ENCODE measurements at regions of chrX and their contacts with region 1.

Region 1: DNA sequence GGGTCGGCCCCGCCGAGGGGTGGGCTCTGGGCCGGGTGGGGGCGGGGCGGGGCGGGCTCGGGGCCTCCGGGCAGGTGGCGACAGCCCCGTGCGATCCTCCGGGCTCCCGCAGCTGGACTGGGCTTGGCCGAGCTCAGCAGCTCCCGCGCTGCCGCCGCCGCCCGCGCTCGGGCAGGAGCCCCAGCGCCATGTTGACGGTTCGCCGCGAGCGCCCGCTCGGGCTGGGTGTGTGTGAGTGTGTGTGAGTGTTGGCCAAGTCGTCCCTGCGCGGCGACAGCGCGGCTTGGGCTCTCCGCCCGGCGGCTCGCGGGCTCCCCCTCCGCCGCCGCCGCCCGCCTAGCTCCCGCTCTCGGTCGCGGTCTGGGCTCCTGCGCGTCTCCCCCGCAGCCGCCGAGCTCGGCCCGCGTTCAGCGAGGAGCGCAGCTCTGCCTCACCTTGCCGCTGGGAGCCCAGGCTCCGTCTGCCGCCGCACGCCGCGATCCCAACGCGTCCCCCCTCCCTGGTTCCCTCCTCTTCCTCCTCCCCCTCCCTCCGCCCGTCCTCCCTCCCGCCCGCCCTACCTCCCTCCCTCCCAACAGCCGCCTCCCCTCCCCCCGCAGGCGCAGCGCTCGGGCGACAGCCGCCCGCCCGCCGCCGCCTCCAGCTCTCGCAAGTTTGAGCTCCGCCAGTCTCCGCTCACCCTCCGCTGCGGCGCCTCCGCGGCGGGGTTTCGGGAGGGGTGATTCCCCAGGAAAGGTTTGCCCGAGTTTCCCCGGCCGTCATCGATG is at the start of gene BCOR:
- H3K4me3 ChIP-seq: peak within 1 kb of the TSS; percentile 85
- H3K27ac ChIP-seq: peak within 1 kb of the TSS; percentile 99
- H3K4me1 ChIP-seq: peaks cover 19% of the 10 kb centered on the region
- CTCF ChIP-seq: no peak

Region 2: GRCh38 chrX:40013266-40014195 is 84.1 kb before region 1 on chrX:
- CTCF ChIA-PET with region 1: no interaction called
- POLR2A ChIA-PET with region 1: interaction called, 13 read pairs
- H3K4me3 ChIP-seq: peak overlapping the region; percentile 49
- H3K27ac ChIP-seq: peak overlapping the region; percentile 95
- H3K4me1 ChIP-seq: no peaks in the 10 kb centered on the region; the same call in 1 of the 2 replicates
- CTCF ChIP-seq: 0 out of 2 replicates have a peak, but pooled peaks have one; percentile 23

Region 3: DNA sequence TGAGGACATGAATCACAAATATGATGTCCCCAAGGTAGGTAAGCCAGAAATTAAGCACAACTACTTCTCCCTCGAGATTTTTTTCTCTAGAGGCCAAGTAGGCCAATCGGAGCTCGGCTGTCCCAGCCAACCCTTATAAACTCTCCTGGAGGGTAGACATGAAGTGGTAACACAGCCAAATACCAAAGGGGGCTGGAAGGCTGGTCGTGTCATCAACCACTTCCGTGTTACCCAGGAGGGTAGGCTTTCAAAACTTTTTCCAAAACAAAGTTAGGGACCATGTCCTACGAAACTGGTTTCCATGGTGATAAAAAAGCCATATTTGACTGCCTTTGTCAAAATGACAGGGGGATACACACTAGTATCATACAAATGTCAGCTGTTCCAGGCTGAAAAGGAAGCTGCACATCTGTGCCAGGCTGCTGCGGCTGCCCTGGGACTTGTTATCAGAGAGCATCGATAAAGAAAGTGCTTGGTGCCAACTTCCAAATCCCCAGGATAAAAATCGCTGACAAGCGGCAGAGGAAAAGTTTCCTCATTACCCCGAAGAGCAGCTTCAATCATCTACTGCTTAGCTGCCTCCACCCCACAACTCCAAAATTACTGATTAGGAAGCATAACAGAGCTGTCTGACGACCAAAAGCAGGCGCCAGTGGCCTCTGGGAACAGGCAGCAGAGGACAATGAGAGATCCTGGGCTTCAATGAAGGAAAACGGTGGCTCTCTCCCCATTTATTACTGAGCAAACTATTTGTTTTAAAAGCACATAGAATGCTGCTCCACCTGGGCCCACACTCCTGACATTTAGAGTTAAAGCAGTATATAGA is 20.7 kb before region 1 on chrX:
- CTCF ChIA-PET with region 1: no interaction called
- POLR2A ChIA-PET with region 1: no interaction called
- H3K4me3 ChIP-seq: no peak overlapping the region
- H3K27ac ChIP-seq: no peak overlapping the region
- H3K4me1 ChIP-seq: peaks cover 2% of the 10 kb centered on the region; the same call in 1 of the 2 replicates
- CTCF ChIP-seq: no peak

Region 4: DNA sequence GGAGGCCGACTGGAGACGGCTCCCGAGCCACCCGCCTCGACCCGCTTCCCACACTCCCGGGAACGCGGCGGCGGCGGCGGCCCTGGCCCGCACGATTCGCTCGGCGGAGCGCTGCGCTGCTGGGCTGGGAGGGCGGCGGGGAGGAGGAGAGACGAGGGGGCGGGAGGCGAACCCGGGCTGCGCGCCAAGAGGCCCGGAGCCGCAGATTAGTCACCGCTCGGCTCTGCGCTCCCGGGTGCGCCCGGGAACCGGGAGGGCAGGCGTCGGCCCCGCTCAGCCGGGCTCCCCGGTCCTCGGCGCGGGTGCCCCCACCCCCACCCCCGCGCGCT is 11.2 kb after region 1 on chrX:
- CTCF ChIA-PET with region 1: no interaction called
- POLR2A ChIA-PET with region 1: interaction called, 50 read pairs
- H3K4me3 ChIP-seq: peak overlapping the region; percentile 51
- H3K27ac ChIP-seq: peak overlapping the region; percentile 100
- H3K4me1 ChIP-seq: peaks cover 8% of the 10 kb centered on the region
- CTCF ChIP-seq: no peak

Region 5: DNA sequence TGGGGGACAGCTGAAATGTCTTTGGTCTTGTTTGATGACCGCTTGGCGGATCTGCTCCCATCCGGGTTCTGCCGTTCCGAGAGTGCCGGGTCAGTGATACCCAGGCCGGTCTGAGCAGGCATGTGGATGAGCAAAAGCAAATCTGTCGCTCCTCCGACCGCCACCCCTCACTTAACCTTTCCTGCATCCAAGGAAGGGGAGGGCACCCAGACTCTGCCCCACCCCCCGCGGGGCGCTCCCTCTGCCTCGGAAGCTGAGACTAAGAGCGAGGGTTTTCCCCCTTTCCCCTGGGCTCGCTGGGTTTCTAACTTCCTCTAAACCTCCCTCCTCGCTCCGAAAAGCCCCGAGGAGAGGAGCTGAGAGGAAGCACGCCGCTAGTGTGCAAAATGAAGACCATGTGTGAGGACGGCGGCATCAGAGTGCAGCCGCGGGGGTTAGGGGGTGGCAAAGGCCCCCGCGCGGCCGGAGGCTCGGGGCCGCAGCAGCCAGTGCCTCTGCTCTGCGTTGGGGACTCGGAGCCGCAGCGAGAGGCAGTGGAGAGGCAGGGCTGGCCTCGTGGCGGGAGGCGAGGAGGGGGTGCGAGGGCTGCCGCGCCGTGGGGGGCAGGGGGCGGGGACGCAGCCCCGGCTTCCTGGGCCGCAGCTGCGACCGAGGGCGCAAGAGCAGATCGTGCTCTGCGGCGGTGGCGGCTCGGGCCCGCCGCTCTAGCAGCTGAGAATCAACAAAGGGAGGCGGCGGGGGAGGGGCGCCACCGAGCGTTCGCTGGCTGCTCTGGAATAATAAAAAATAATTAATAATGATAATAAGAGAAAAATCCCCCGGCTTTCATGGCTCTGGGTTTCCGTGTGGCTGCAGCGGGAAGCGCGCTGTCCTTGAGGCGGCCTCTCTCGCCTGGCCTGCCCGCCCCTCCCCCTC is 55.9 kb after region 1 on chrX:
- CTCF ChIA-PET with region 1: interaction called, 3 read pairs
- POLR2A ChIA-PET with region 1: interaction called, 14 read pairs
- H3K4me3 ChIP-seq: peak overlapping the region; percentile 25
- H3K27ac ChIP-seq: peak overlapping the region; percentile 95
- H3K4me1 ChIP-seq: peaks cover 15% of the 10 kb centered on the region
- CTCF ChIP-seq: peak; percentile 60; the same call in 1 of the 2 replicates

Region 6: GRCh38 chrX:40175511-40176350 is 78.1 kb after region 1 on chrX:
- CTCF ChIA-PET with region 1: no interaction called
- POLR2A ChIA-PET with region 1: interaction called, 11 read pairs
- H3K4me3 ChIP-seq: peak overlapping the region; percentile 35
- H3K27ac ChIP-seq: peak overlapping the region; percentile 86
- H3K4me1 ChIP-seq: peaks cover under 1% of the 10 kb centered on the region
- CTCF ChIP-seq: no peak

Region 7: DNA sequence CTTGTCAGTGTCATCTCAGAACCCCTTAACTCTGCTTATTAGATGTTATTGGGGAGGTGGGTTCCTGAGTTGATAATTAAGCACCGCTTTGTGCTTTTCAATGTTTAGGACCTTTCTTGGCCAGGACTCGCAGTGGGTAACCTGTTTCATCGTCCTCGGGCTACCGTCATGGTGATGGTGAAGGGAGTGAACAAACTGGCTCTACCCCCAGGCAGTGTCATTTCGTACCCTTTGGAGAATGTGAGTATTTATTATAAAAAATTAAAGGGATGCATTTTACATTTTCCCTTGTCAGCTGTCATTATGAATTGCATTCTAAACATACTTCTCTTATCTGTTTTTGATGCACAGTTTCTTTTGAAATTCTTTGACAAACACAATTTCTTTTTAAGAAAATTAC is 493.4 kb after region 1 on chrX:
- CTCF ChIA-PET with region 1: no interaction called
- POLR2A ChIA-PET with region 1: no interaction called
- H3K4me3 ChIP-seq: no peak overlapping the region
- H3K27ac ChIP-seq: no peak overlapping the region
- H3K4me1 ChIP-seq: no peaks in the 10 kb centered on the region
- CTCF ChIP-seq: no peak